HCT116 (cell line): ENCODE measurements at regions of chr11 and their contacts with region 1.

Region 1: DNA sequence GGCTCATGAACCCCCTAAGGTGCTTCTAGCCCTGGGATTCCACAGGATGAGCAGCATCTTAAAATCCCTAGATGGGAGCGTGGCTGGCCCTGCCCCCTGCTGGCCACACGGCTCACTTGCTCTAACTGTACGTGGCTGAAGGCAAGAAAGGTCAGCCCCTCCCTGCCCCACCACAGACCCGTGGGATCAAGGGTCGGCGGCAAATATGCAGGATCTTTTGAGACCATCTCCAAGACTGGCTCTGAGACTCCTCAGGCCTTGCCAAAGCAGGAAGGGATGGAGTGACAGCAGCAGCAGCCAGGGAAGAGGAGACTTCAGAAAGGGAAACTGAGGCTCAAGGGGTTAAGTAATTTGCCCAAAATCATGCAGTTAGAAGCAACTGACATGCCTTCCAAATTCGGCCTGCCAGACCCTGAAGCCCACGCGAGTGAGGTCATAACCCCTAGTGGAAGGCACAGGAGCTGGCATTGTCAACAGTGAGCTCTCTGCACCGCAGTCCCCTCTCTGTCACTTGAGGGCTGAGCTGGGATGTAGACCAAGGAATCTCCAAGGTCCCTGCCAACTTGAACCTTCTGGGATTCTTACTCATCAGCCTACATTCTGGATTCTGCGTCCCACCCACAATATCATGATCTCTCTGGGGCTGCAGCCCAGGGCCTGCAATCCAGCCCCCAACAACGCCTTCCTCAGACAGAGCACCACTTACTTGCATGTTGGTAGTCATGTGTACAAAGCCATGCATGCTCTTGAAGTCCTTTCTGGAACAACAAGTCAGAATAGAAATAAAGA is 31.4 kb downstream of the CREB3L1 start:
- DNase-seq: peak; percentile 48
- ATAC-seq: peak; percentile 82
- H3K4me3 ChIP-seq: no peak overlapping the region
- H3K27ac ChIP-seq: no peak overlapping the region
- H3K4me1 ChIP-seq: peaks cover 6 to 32% of the 10 kb centered on the region in 2 experiments
- H3K27me3 ChIP-seq: no peaks in the 10 kb centered on the region
- CTCF ChIP-seq: peak; percentile 85 to 96 (median 93)
- POLR2A ChIP-seq: no peak
- RAD21 ChIP-seq: peak; percentile 92

Region 2: GRCh38 chr11:46247664-46248063 is 61.2 kb before region 1 on chr11:
- CTCF ChIA-PET with region 1: interaction called, 22 read pairs
- POLR2A ChIA-PET with region 1: interaction called, 13 read pairs
- RAD21 ChIA-PET with region 1: interaction called, 4 read pairs
- intact Hi-C with region 1: loop called (anchors 1 kb)
- DNase-seq: peak; percentile 76
- ATAC-seq: peak; percentile 29
- H3K4me3 ChIP-seq: no peak overlapping the region
- H3K27ac ChIP-seq: peak overlapping the region; percentile 47; the same call in 1 of the 2 replicates
- H3K4me1 ChIP-seq: peaks cover 11 to 53% of the 10 kb centered on the region in 2 experiments
- H3K27me3 ChIP-seq: no peaks in the 10 kb centered on the region
- CTCF ChIP-seq: peak; percentile 62 to 90 (median 76)
- POLR2A ChIP-seq: no peak
- RAD21 ChIP-seq: peak; percentile 95

Region 3: GRCh38 chr11:46322759-46323158 is 13.9 kb after region 1 on chr11:
- CTCF ChIA-PET with region 1: interaction called, 13 read pairs
- POLR2A ChIA-PET with region 1: no interaction called
- RAD21 ChIA-PET with region 1: no interaction called
- intact Hi-C with region 1: no loop called
- DNase-seq: peak; percentile 45
- ATAC-seq: peak; percentile 89
- H3K4me3 ChIP-seq: no peak overlapping the region
- H3K27ac ChIP-seq: no peak overlapping the region
- H3K4me1 ChIP-seq: peaks cover 0 to 3% of the 10 kb centered on the region in 2 experiments; a peak in 2 of 4 replicates
- H3K27me3 ChIP-seq: no peaks in the 10 kb centered on the region
- CTCF ChIP-seq: peak; percentile 24 to 86 (median 68); a peak in 5 of 6 replicates
- POLR2A ChIP-seq: no peak
- RAD21 ChIP-seq: peak; percentile 48